Activated T-helper 1 cell treated with anti-CD3 and anti-CD28 coated beads, Interleukin-12 subunit alpha, Interleukin-12 subunit beta, Interleukin-2, Interleukin-4 antibody, amounts not matched to agents 30 ng/mL and 10 ng/mL and 1 ng/mL, durations not matched to agents 14 hours and 24 hours and 36 hours (primary cell): ENCODE measurements at regions of chr6 and their contacts with region 1.

Region 1: DNA sequence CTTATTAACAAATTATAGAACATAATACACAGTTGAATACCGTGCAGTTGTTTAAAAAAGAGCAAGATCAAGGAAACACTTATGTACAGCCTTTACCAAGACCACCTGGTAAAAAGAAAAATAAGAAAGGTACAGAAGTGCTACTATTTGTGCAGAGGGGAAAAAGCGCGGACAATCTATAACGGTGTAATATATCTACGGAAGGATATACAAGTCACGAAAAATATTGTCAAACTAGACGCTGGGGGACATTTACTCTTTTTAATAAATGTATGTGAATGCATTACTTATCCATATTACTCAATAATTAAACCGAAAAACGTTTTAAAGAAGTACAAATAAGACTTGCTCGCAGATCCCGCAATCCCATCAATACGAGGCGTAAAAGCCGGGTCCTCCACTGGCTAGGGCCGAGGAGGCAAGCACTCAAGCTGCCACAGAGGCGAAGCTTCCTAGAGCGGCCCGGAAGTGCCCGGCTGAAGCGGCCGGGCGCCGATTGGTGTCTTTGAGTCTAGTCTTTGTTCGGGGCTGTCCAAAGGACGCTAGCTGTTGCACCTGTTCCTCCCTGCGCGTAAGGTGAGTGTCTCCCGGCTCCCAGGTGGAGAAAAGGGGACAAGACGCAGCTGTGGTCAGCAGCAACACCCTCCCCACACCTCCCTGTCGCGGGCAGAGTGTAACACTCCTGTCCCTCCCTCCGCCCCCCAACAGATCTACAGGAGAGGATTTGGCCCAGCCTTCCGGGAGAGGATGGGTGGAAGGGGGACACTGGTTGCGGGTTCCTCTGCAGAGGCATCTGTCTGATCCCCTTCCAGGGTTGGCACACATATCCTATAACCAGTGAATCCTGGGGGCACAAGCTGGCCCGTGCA is at the start of gene ZSCAN16:
- DNase-seq: peak; percentile 66
- H3K4me3 Mint-ChIP-seq: peak within 1 kb of the TSS; percentile 95
- H3K27ac Mint-ChIP-seq: peak within 1 kb of the TSS; percentile 86
- H3K4me1 Mint-ChIP-seq: peaks cover 41% of the 10 kb centered on the region
- H3K27me3 Mint-ChIP-seq: no peaks in the 10 kb centered on the region
- total RNA-seq, gene ZSCAN16: 4.8 TPM in 2 replicates

Region 2: DNA sequence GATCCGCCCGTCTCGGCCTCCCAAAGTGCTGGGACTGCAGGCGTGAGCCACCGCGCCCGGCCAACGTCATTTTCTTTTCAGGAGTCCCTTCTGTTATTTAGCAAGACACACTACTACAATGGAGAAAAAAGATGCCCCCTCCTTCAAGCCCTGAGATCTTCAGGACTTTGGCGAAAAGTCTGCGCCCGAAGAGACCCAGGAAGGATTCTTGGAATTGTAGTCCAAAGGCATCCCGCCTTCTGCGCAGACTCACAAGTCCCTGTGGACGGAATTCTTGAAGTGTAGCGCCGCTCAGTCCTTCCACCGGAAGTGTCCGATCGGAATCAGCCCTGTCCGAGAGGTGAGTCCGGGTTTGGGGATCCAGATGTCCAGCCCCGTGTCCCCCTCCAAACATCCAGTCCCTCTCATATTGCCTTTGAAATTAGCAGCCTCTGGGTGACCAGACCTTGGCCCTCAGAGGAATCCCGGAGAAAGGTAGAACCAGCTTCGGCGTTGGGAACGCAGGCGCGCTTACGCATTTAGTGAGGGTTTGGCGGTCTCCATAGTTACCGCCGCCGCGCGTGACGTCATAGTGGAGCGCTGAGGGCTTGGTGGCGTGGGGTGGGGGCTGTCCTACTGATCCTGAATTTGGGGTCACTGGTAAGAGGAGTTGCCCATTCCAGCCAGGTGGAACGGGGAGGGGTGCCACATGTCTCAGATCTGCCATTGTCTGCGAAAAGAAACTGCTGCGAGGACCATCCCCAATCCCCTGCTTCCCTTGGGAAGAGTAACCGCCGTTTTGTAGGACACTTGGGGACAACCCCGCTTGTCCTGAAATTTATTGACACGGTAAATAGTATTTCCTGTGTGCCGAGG is 43.5 kb before region 1 on chr6:
- intact Hi-C with region 1: loop called (anchors 1 kb)
- DNase-seq: peak; percentile 82
- H3K4me3 Mint-ChIP-seq: peak overlapping the region; percentile 96
- H3K27ac Mint-ChIP-seq: peak overlapping the region; percentile 96
- H3K4me1 Mint-ChIP-seq: peaks cover 21% of the 10 kb centered on the region
- H3K27me3 Mint-ChIP-seq: peaks cover 2% of the 10 kb centered on the region